ENCODE measurements at regions of chr1 and their contacts with region 1.

Region 1: DNA sequence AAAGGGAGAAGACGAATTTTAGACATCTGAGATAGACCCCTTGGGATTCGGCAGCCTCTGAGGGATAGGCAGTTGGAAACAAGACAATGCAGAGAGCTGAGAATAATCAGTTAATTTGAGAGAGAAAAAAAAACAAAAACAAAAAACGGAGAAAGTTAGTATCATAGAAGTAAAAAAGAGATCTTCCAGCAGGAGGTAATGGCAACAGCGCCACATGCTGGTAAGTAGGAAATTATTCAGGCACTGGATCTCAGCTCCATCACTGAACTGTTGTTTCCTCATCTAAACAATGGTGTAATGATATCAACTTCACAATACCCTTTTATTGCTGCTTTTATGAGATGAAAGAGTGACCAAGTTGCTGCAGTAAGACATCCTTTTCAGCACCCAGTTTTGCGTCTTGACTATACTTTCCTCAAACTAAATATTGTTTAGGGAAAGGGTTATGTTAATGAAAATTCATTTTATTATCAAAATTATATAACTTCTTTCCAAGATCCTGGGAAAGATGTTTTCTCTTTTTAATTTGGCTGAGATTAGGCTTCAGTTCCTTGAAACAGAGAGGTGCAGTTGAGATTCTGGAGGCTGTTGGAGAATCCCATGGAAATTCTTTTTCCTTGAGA is 91.4 kb upstream of the KCNA3 start:
- DNase-seq: peak; percentile 75
- ATAC-seq: peak; percentile 76
- H3K4me3 Mint-ChIP-seq: no peak overlapping the region
- H3K27ac Mint-ChIP-seq: no peak overlapping the region
- H3K4me1 Mint-ChIP-seq: peaks cover 1% of the 10 kb centered on the region
- H3K27me3 Mint-ChIP-seq: peaks cover 2% of the 10 kb centered on the region
- CTCF ChIP-seq: peak; percentile 90

Region 2: GRCh38 chr1:110524311-110525251 is 241.6 kb before region 1 on chr1:
- CTCF ChIA-PET with region 1: interaction called, 23 read pairs
- POLR2A ChIA-PET with region 1: interaction called, 3 read pairs
- intact Hi-C with region 1: no loop called
- DNase-seq: peak; percentile 69
- ATAC-seq: peak; percentile 92
- H3K4me3 Mint-ChIP-seq: no peak overlapping the region
- H3K27ac Mint-ChIP-seq: no peak overlapping the region
- H3K4me1 Mint-ChIP-seq: no peaks in the 10 kb centered on the region
- H3K27me3 Mint-ChIP-seq: peaks cover 10% of the 10 kb centered on the region
- CTCF ChIP-seq: peak; percentile 89

Region 3: GRCh38 chr1:110605901-110606656 is 160.1 kb before region 1 on chr1 and contains the start of gene KCNA2:
- CTCF ChIA-PET with region 1: interaction called, 26 read pairs
- POLR2A ChIA-PET with region 1: no interaction called
- intact Hi-C with region 1: no loop called
- DNase-seq: no peak
- ATAC-seq: peak; percentile 40
- H3K4me3 Mint-ChIP-seq: peak within 1 kb of the TSS; percentile 68
- H3K27ac Mint-ChIP-seq: no peak within 1 kb of the TSS
- H3K4me1 Mint-ChIP-seq: peaks cover 5% of the 10 kb centered on the region
- H3K27me3 Mint-ChIP-seq: peaks cover 44% of the 10 kb centered on the region
- CTCF ChIP-seq: no peak
- total RNA-seq, gene KCNA2: 0.02 to 0.14 TPM

Region 4: GRCh38 chr1:110630839-110631663 is 135.1 kb before region 1 on chr1:
- CTCF ChIA-PET with region 1: interaction called, 67 read pairs
- POLR2A ChIA-PET with region 1: interaction called, 7 read pairs
- intact Hi-C with region 1: loop called (anchors 1 kb)
- DNase-seq: peak; percentile 89
- ATAC-seq: peak; percentile 69
- H3K4me3 Mint-ChIP-seq: no peak overlapping the region
- H3K27ac Mint-ChIP-seq: no peak overlapping the region
- H3K4me1 Mint-ChIP-seq: peaks cover 52% of the 10 kb centered on the region
- H3K27me3 Mint-ChIP-seq: no peaks in the 10 kb centered on the region
- CTCF ChIP-seq: peak; percentile 85

Region 5: GRCh38 chr1:110713221-110713620 is 52.9 kb before region 1 on chr1:
- CTCF ChIA-PET with region 1: interaction called, 10 read pairs
- POLR2A ChIA-PET with region 1: no interaction called
- intact Hi-C with region 1: no loop called
- DNase-seq: no peak
- ATAC-seq: no peak
- H3K4me3 Mint-ChIP-seq: no peak overlapping the region
- H3K27ac Mint-ChIP-seq: peak overlapping the region; percentile 18
- H3K4me1 Mint-ChIP-seq: peaks cover 19% of the 10 kb centered on the region
- H3K27me3 Mint-ChIP-seq: no peaks in the 10 kb centered on the region
- CTCF ChIP-seq: no peak

Region 6: DNA sequence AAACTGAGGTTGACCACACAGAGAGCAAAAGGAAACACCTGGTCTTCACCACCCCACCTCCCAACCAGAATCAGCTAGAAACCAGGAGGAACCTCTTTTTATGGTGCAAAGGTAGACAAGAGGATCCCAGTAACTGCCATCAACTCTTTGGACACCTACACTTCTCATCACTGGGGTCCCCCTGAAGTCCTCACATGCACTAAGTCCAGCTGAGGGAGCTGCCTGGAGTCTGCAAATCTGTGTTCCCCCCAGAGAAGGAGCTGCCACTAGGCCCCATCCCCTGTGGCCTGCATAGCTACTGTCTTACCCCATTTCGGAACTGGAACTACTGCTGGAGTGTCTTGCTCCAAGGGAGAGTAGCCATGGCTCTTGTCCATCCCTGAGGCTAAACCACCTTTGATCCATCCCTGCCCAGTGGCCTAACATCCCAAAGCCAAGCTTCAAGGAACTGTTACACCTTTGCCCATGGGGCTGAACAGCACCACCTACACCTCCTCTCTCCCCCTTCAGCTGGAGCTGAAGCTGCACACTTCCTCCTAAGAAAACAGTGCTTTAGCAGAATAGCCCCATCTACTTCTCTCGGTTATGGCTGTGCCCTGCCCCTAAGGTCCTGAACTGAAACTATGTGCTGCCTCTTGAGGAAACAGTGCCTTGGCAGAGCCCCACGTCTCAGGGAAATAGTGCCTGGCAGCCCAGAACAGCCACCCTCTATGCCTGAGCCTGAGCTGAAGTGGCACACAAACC is 21.4 kb after region 1 on chr1:
- CTCF ChIA-PET with region 1: interaction called, 30 read pairs
- POLR2A ChIA-PET with region 1: no interaction called
- intact Hi-C with region 1: no loop called
- DNase-seq: peak; percentile 73
- ATAC-seq: peak; percentile 73
- H3K4me3 Mint-ChIP-seq: peak overlapping the region; percentile 35
- H3K27ac Mint-ChIP-seq: peak overlapping the region; percentile 84
- H3K4me1 Mint-ChIP-seq: peaks cover 51% of the 10 kb centered on the region
- H3K27me3 Mint-ChIP-seq: no peaks in the 10 kb centered on the region
- CTCF ChIP-seq: no peak